CD4-positive, alpha-beta T cell (primary cell): ENCODE measurements at regions of chr3 and their contacts with region 1.

Region 1: DNA sequence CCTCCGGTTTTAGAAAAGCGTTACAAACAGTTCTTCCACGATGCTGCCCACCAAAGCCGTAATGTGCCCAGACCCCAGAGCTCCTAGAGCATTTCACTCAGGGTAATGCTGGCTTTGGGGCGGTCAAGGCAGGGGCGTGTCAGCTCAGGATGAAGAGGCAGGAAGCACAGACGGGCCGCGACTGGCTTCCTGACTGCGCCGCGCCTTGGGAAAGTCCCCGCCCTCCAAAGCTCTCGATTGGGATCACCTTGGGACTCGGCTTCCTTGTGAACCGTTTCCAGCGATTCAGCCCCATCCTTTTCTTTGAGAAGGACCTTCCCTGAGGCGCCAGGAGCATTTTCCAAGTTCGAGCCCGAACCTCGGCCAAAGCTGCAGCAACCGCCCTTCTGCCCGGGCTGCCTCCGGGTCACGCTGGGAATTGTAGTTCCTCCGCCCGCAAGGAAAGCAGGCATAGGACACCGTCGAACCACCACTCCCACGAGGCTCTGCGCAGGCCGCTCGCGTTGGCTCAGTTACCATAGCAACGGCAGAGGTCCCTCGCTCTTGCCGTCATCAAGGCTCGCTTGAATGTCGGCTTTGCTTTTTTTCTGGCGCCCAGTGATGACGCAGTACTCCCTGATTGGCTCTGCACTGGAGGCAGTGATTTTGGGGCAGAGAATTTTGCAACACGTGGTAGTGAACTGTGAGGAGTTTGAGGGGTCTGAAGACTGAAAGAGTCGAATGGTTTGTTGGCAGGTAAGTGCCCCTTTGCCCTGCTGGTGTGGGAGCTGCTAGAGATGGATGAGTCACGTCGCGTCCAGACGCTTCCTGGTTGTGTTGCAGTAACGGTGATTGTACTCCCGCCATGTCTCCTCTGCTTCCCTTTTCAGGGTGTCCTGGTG is at the starts of genes CCDC191 and QTRT2:
- DNase-seq: peak; percentile 93 to 100 (median 97)
- ATAC-seq: peak; percentile 95
- H3K4me3 ChIP-seq: peak within 1 kb of the TSS; percentile 88
- H3K4me3 Mint-ChIP-seq: peak within 1 kb of the TSS; percentile 95
- H3K27ac ChIP-seq: peak within 1 kb of the TSS; percentile 87 to 96
- H3K27ac Mint-ChIP-seq: peak within 1 kb of the TSS; percentile 94
- H3K4me1 ChIP-seq: peaks cover 18% of the 10 kb centered on the region
- H3K4me1 Mint-ChIP-seq: peaks cover 53% of the 10 kb centered on the region
- H3K27me3 ChIP-seq: no peaks in the 10 kb centered on the region
- H3K27me3 Mint-ChIP-seq: no peaks in the 10 kb centered on the region
- CTCF ChIP-seq: no peak
- total RNA-seq, gene CCDC191: 3.6 to 3.7 TPM
- total RNA-seq, gene QTRT2: 22.8 to 27.0 TPM

Region 2: DNA sequence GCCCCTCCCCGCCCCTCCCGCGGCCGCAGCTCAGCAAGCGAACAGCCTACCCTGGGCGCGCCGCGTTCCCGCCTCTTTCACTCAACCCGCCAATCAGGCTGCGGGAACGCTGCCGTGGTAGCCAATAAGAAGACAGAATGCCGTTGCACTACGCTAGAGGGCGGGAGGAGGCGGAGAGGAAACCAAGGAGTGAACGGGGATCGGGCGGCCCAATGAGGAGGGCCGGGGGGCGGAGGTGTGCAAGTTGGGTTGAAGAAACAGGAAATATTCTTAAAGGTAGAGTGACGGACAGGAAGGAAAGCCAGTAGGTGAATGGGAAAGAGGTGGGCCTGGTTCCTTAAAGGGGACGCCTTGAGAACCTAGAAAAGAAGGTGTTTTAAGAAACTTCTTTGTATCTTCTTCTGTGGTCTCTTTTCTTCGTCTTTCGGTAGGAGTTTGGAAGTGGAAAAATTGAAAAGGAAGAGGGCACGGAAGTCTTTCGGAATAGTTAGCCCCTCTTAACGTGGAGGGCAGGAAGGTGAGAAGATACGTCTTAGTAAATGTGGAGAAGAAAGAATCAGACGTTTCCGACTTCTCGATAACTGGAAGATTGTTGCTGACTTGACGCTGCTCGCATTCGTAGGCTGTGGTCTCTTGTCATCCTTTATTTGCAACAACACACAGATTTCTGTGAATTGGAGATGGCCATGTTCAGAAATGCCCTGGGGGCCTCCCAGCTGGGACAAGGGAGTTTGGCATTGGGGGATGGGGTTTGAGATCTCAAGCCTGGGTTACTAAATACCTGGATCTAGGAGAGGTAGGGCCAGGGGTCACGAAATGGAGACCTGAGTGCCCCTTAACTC is 359.5 kb before region 1 on chr3:
- CTCF ChIA-PET with region 1: no interaction called
- POLR2A ChIA-PET with region 1: no interaction called
- intact Hi-C with region 1: loop called in 1 of 2 experiments (anchors 5 kb)
- DNase-seq: peak; percentile 96 to 100 (median 98)
- ATAC-seq: peak; percentile 87
- H3K4me3 ChIP-seq: peak overlapping the region; percentile 78
- H3K4me3 Mint-ChIP-seq: no peak overlapping the region
- H3K27ac ChIP-seq: peak overlapping the region; percentile 87
- H3K27ac Mint-ChIP-seq: no peak overlapping the region
- H3K4me1 ChIP-seq: peaks cover 23% of the 10 kb centered on the region
- H3K4me1 Mint-ChIP-seq: peaks cover 23% of the 10 kb centered on the region
- H3K27me3 ChIP-seq: no peaks in the 10 kb centered on the region
- H3K27me3 Mint-ChIP-seq: no peaks in the 10 kb centered on the region
- CTCF ChIP-seq: no peak

Region 3: GRCh38 chr3:113947372-113948014 is 108.9 kb before region 1 on chr3 and contains the start of gene ZDHHC23:
- CTCF ChIA-PET with region 1: no interaction called
- POLR2A ChIA-PET with region 1: no interaction called
- intact Hi-C with region 1: loop called (anchors 2 to 5 kb)
- DNase-seq: peak; percentile 25 to 90 (median 54)
- ATAC-seq: peak; percentile 89
- H3K4me3 ChIP-seq: peak within 1 kb of the TSS; percentile 84
- H3K4me3 Mint-ChIP-seq: peak within 1 kb of the TSS; percentile 91
- H3K27ac ChIP-seq: no peak within 1 kb of the TSS
- H3K27ac Mint-ChIP-seq: peak within 1 kb of the TSS; percentile 25
- H3K4me1 ChIP-seq: peaks cover 15% of the 10 kb centered on the region
- H3K4me1 Mint-ChIP-seq: peaks cover 18% of the 10 kb centered on the region
- H3K27me3 ChIP-seq: peaks cover 0 to 3% of the 10 kb centered on the region in 2 experiments
- H3K27me3 Mint-ChIP-seq: peaks cover 13% of the 10 kb centered on the region
- CTCF ChIP-seq: no peak
- total RNA-seq, gene ZDHHC23: 3.2 TPM